ENCODE measurements at regions of chr12 and their contacts with region 1.

Region 1: DNA sequence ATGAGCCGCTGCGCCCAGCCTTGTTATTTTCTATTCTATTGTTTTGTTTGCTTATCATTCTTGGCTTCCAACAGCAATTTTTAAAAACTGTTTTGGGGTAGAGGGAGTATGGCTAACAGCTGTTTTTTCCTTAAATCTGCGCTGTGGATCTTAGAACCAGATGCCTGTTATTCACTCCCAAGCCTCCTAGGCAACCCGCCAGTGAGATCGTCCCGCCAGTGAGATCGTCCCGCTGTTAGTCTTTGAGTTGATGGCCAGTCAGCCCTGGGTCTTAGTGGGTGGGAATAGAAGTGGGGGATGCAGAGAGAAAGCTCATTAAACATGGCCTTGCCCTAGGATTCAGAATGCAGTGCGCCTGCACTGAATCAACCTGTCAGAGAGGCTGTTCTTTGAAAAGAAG is 67.3 kb upstream of the BICD1 start:
- DNase-seq: no peak
- ATAC-seq: no peak
- H3K4me3 ChIP-seq: no peak overlapping the region
- H3K4me3 Mint-ChIP-seq: no peak overlapping the region
- H3K27ac ChIP-seq: no peak overlapping the region
- H3K27ac Mint-ChIP-seq: no peak overlapping the region
- H3K4me1 ChIP-seq: no peaks in the 10 kb centered on the region
- H3K4me1 Mint-ChIP-seq: no peaks in the 10 kb centered on the region
- H3K27me3 ChIP-seq: no peaks in the 10 kb centered on the region
- H3K27me3 Mint-ChIP-seq: no peaks in the 10 kb centered on the region

Region 2: DNA sequence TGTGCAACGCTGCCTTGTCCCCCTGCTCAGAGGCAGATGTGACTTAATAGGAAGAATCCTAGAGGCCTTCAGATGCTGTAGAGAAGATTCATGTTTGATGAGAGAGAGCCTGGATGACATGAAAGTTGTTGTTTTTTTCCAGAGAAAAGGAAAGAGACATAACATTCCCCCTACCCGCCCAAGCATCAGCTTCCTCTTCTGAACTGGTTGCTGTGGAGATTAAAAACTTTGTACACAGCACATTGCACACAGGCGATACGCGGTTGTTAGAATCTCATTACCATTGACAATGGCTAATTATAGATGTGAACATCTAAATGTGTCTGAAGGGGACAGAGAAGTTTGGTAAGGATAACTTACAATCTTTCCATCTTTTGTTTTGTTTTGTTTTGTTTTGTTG is 393.4 kb before region 1 on chr12:
- CTCF ChIA-PET with region 1: no interaction called
- POLR2A ChIA-PET with region 1: interaction called in 1 of 2 experiments, 13 read pairs
- DNase-seq: no peak
- ATAC-seq: no peak
- H3K4me3 ChIP-seq: no peak overlapping the region
- H3K4me3 Mint-ChIP-seq: no peak overlapping the region
- H3K27ac ChIP-seq: no peak overlapping the region
- H3K27ac Mint-ChIP-seq: no peak overlapping the region
- H3K4me1 ChIP-seq: no peaks in the 10 kb centered on the region
- H3K4me1 Mint-ChIP-seq: peaks cover 0 to 5% (median 0%) of the 10 kb centered on the region in 3 donors
- H3K27me3 ChIP-seq: peaks cover 0 to 2% of the 10 kb centered on the region in 2 experiments
- H3K27me3 Mint-ChIP-seq: no peaks in the 10 kb centered on the region

Region 3: GRCh38 chr12:32049960-32050359 is 10.6 kb after region 1 on chr12:
- CTCF ChIA-PET with region 1: no interaction called
- POLR2A ChIA-PET with region 1: interaction called in 1 of 2 experiments, 14 read pairs
- DNase-seq: no peak
- ATAC-seq: no peak
- H3K4me3 ChIP-seq: no peak overlapping the region
- H3K4me3 Mint-ChIP-seq: no peak overlapping the region
- H3K27ac ChIP-seq: no peak overlapping the region
- H3K27ac Mint-ChIP-seq: no peak overlapping the region
- H3K4me1 ChIP-seq: no peaks in the 10 kb centered on the region
- H3K4me1 Mint-ChIP-seq: peaks cover 5 to 6% (median 6%) of the 10 kb centered on the region in 3 donors
- H3K27me3 ChIP-seq: no peaks in the 10 kb centered on the region
- H3K27me3 Mint-ChIP-seq: no peaks in the 10 kb centered on the region

Region 4: DNA sequence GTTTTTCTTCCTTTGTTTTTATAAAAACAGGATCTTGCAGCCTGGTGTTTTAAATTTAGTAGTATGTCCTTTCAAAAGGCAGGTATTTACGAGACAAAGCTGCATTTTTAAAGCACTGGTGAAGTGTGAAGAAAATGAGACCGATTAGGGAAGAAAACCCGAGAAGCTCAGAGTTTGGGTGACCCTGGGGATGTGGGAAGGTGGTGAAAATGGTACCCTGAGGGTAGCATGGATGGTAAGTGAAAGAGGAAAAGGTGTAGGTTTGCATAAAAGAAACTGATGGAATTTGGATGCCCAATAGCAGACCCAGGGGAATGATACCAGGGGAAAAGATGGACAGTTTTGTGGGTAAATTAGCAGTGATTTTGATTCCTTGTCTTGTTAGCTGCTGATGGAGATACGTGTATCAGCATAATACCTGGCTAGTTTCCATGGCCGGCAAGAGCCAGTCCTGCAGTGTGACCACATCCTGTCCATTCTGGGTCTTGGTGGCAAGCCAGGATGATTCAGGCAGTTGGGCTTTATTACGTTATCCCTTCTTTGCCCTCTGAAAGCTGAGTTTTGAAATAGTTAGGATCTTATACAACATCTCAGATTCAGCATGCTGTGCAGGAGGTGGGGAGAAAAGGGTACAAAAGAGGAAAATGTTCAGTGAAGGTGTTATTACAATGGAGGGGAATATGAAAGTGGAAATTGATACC is 76.2 kb after region 1 on chr12:
- CTCF ChIA-PET with region 1: no interaction called
- POLR2A ChIA-PET with region 1: no interaction called
- DNase-seq: no peak
- ATAC-seq: no peak
- H3K4me3 ChIP-seq: no peak overlapping the region
- H3K4me3 Mint-ChIP-seq: no peak overlapping the region
- H3K27ac ChIP-seq: no peak overlapping the region
- H3K27ac Mint-ChIP-seq: no peak overlapping the region
- H3K4me1 ChIP-seq: no peaks in the 10 kb centered on the region
- H3K4me1 Mint-ChIP-seq: peaks cover 11 to 15% (median 12%) of the 10 kb centered on the region in 3 donors
- H3K27me3 ChIP-seq: no peaks in the 10 kb centered on the region
- H3K27me3 Mint-ChIP-seq: no peaks in the 10 kb centered on the region

Region 5: DNA sequence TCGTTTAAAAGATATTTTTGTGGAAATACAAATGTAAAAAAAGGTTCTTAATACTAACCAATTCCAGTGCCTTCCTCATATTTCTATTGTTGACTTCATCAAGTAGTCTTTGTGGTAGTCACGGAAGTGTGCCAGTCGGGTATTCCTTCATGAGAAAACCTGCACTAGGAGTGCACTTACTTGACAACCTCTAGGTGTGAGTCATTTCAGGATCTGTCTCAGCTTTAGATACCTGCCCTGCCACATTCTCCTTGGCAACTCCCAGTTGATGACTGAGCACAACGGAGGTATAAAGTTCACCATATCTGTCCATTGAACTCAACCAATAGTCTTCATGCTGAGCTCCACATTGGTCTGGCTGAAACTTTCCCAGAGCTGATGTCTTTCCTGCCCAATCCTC is 1184.6 kb after region 1 on chr12:
- CTCF ChIA-PET with region 1: no interaction called
- POLR2A ChIA-PET with region 1: no interaction called
- DNase-seq: no peak
- ATAC-seq: no peak
- H3K4me3 ChIP-seq: no peak overlapping the region
- H3K4me3 Mint-ChIP-seq: no peak overlapping the region
- H3K27ac ChIP-seq: no peak overlapping the region
- H3K27ac Mint-ChIP-seq: no peak overlapping the region
- H3K4me1 ChIP-seq: no peaks in the 10 kb centered on the region
- H3K4me1 Mint-ChIP-seq: no peaks in the 10 kb centered on the region
- H3K27me3 ChIP-seq: peaks cover 0 to 9% of the 10 kb centered on the region in 2 experiments
- H3K27me3 Mint-ChIP-seq: no peaks in the 10 kb centered on the region